CD4-positive, alpha-beta T cell (primary cell): ENCODE measurements at regions of chr13 and their contacts with region 1.

Region 1: GRCh38 chr13:44267966-44268365 is 105.7 kb upstream of the SERP2 start:
- DNase-seq: no peak
- ATAC-seq: no peak
- H3K4me3 ChIP-seq: no peak overlapping the region
- H3K4me3 Mint-ChIP-seq: no peak overlapping the region
- H3K27ac ChIP-seq: no peak overlapping the region
- H3K27ac Mint-ChIP-seq: no peak overlapping the region
- H3K4me1 ChIP-seq: no peaks in the 10 kb centered on the region
- H3K4me1 Mint-ChIP-seq: peaks cover under 1% of the 10 kb centered on the region
- H3K27me3 ChIP-seq: no peaks in the 10 kb centered on the region
- H3K27me3 Mint-ChIP-seq: peaks cover 4% of the 10 kb centered on the region
- CTCF ChIP-seq: no peak

Region 2: GRCh38 chr13:44243198-44243857 is 24.6 kb before region 1 on chr13:
- CTCF ChIA-PET with region 1: no interaction called
- POLR2A ChIA-PET with region 1: no interaction called
- intact Hi-C with region 1: no loop called
- DNase-seq: peak in 6 of 14 experiments; percentile 4 to 61 (median 30)
- ATAC-seq: peak; percentile 34
- H3K4me3 ChIP-seq: no peak overlapping the region
- H3K4me3 Mint-ChIP-seq: no peak overlapping the region
- H3K27ac ChIP-seq: no peak overlapping the region
- H3K27ac Mint-ChIP-seq: no peak overlapping the region
- H3K4me1 ChIP-seq: peaks cover 5% of the 10 kb centered on the region
- H3K4me1 Mint-ChIP-seq: peaks cover 12% of the 10 kb centered on the region
- H3K27me3 ChIP-seq: no peaks in the 10 kb centered on the region
- H3K27me3 Mint-ChIP-seq: no peaks in the 10 kb centered on the region
- CTCF ChIP-seq: no peak

Region 3: DNA sequence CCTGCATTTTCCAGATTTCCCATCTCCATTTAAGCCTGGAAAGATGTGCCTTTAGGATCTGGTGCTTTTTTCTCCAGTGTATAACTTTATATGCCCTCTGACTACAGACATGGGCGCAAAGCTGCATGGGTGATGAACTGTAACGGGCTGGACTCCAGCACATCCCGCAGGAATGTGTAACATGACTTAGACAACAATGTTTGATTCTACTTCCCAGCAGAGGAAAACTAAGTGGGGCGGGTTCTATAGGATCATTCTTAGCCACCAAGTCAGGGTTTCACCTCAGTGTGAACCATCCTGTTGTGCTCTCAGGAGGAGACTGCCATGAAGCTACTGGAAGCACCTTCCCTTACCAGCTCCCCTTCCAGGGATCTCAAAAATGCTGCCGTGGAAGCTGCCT is 12.5 kb after region 1 on chr13:
- CTCF ChIA-PET with region 1: no interaction called
- POLR2A ChIA-PET with region 1: no interaction called
- intact Hi-C with region 1: loop called in 1 of 2 experiments (anchors 2 kb)
- DNase-seq: no peak
- ATAC-seq: no peak
- H3K4me3 ChIP-seq: no peak overlapping the region
- H3K4me3 Mint-ChIP-seq: no peak overlapping the region
- H3K27ac ChIP-seq: no peak overlapping the region
- H3K27ac Mint-ChIP-seq: no peak overlapping the region
- H3K4me1 ChIP-seq: peaks cover 8% of the 10 kb centered on the region
- H3K4me1 Mint-ChIP-seq: peaks cover 22% of the 10 kb centered on the region
- H3K27me3 ChIP-seq: peaks cover 0 to 7% of the 10 kb centered on the region in 2 experiments
- H3K27me3 Mint-ChIP-seq: peaks cover 35% of the 10 kb centered on the region
- CTCF ChIP-seq: no peak

Region 4: DNA sequence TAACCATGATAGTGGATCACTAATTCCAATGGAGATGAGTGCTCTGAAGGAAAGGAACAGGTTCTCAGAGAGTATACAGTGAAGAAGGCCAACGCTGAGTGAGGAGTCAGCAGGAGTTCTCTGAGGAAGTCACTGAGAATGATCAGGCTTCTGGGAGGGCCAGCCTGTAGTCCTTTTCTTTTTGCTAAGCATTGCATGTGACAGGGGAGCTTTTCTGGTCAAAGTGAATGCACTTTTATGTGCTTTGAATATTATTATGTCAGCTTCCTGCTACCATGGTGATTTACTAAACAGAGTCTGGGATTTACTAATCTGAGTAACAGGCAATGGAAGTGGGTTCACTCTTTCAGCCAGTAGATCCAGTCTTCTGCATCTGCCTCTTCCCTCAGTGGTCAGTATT is 24.6 kb after region 1 on chr13:
- CTCF ChIA-PET with region 1: no interaction called
- POLR2A ChIA-PET with region 1: no interaction called
- intact Hi-C with region 1: no loop called
- DNase-seq: no peak
- ATAC-seq: peak; percentile 48
- H3K4me3 ChIP-seq: no peak overlapping the region
- H3K4me3 Mint-ChIP-seq: no peak overlapping the region
- H3K27ac ChIP-seq: no peak overlapping the region
- H3K27ac Mint-ChIP-seq: no peak overlapping the region
- H3K4me1 ChIP-seq: peaks cover 2% of the 10 kb centered on the region
- H3K4me1 Mint-ChIP-seq: peaks cover 18% of the 10 kb centered on the region
- H3K27me3 ChIP-seq: peaks cover 2 to 3% of the 10 kb centered on the region in 2 experiments
- H3K27me3 Mint-ChIP-seq: peaks cover 17% of the 10 kb centered on the region
- CTCF ChIP-seq: no peak

Region 5: GRCh38 chr13:44637581-44637980 is 369.6 kb after region 1 on chr13:
- CTCF ChIA-PET with region 1: no interaction called
- POLR2A ChIA-PET with region 1: no interaction called
- intact Hi-C with region 1: no loop called
- DNase-seq: no peak
- ATAC-seq: no peak
- H3K4me3 ChIP-seq: no peak overlapping the region
- H3K4me3 Mint-ChIP-seq: no peak overlapping the region
- H3K27ac ChIP-seq: no peak overlapping the region
- H3K27ac Mint-ChIP-seq: no peak overlapping the region
- H3K4me1 ChIP-seq: no peaks in the 10 kb centered on the region
- H3K4me1 Mint-ChIP-seq: no peaks in the 10 kb centered on the region
- H3K27me3 ChIP-seq: no peaks in the 10 kb centered on the region
- H3K27me3 Mint-ChIP-seq: no peaks in the 10 kb centered on the region
- CTCF ChIP-seq: no peak